Motor neuron (in vitro differentiated cells): ENCODE measurements at regions of chr2 and their contacts with region 1.

Region 1: DNA sequence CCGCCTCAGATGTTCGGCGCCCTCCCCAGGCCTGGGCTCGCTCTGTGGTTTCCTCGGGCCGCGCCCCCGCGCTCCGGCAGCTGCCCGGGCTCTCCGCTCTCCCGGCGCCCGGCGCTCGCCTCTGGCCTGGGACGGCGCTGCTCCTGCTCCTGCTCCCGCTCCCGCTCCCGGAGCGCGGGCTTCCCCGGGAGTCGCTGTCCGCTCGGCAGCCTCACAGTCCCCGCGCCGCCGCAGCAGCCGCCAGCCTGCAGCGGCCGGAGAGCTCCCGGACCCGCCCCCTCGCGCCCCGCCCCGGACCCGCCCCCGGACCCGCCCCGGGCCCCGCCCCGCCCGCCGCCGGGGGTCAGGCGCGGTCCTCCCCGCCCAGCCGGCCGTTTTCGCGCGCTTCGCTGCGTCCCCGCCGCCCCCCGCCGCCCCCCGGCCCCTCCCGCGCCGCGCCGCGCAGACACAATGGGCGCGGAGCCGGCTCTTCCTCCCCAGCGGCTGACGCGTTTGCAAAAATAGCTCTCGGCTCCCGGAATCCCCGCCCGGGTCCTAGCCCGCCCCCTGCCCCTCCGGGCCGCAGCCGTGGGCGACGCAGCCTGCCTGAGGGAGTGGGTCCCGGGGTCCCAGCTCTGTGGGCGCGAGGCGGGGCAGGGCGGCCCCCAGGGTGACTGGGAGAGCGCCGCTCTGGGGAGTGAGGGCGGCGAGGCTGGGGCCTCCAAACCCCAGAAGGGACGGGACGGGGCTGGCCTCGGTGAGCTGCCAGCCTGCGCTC is at the start of gene ARL4C:
- ATAC-seq: peak; percentile 65 to 91 (median 76)
- H3K4me3 ChIP-seq: peak within 1 kb of the TSS; percentile 77 to 98 (median 93)
- H3K27ac ChIP-seq: peak within 1 kb of the TSS; percentile 80 to 89
- H3K4me1 ChIP-seq: peaks cover 7 to 9% of the 10 kb centered on the region in 2 donors
- total RNA-seq, gene ARL4C: 0.27 to 129 (median 47.0) TPM

Region 2: DNA sequence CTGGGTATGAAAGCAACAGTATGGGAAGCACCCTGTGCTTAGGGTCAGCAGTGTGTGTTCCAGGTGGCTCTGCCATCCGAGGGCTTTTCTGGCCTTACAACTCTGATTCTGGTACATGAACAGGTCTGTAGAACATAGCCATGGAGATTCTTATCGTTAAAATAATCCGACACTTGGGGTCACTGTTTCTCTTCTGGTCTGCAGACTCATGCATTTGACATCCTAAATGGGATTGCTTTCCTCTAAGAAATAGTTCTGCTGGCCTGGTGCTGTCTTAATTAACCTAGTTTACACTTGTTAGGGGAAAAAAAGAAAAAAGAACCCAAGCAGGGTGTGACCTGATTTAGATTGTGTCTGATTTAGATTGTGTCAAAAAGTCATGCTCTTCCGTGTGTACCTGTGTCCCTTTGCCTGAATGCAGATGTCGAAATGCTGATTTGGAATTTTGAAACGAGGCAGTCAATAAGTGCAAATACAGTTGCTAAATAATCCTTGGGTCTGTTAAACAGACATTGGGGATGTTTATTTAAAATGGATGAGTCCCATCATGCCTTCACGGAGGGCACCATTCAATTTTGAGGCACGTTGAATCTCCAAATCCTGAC is 520.2 kb before region 1 on chr2:
- in situ Hi-C with region 1: loop called in 1 of 9 experiments (anchors 25 kb)
- ATAC-seq: peak; percentile 6 to 75 (median 66)
- H3K4me3 ChIP-seq: no peak overlapping the region
- H3K27ac ChIP-seq: no peak overlapping the region
- H3K4me1 ChIP-seq: peaks cover 12 to 15% of the 10 kb centered on the region in 2 donors

Region 3: DNA sequence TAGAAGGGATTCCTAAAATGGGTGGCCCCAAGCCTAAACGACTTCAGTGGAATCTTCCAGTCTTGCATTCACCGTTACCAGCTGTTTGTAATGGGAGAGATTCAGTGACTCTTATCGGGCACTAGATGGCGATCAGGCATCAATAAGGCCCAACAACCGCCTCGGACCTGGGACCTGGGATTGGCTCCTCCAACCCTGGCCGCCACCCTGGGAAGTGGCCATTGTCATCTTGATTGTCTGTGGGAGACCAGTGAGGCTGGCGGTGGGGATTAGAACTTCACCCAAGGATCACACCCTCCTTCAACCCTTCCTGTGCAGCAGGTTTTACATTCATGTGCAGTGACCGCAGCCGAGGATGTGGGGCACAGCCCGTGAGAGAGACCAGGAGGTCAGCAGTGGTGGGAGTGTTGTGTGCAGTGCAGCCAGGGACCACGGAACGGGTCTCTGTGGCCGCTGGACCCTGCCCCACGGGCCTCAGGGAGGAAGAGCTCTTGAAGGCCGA is 361.2 kb before region 1 on chr2:
- in situ Hi-C with region 1: loop called in 2 of 9 experiments (anchors 10 to 25 kb)
- ATAC-seq: peak; percentile 91 to 98 (median 94)
- H3K4me3 ChIP-seq: no peak overlapping the region
- H3K27ac ChIP-seq: no peak overlapping the region
- H3K4me1 ChIP-seq: peaks cover 10 to 11% of the 10 kb centered on the region in 2 donors

Region 4: GRCh38 chr2:234288974-234289455 is 208.0 kb before region 1 on chr2:
- in situ Hi-C with region 1: loop called in 1 of 9 experiments (anchors 10 kb)
- ATAC-seq: peak in 5 of 8 experiments; percentile 5 to 65 (median 17)
- H3K4me3 ChIP-seq: no peak overlapping the region
- H3K27ac ChIP-seq: no peak overlapping the region
- H3K4me1 ChIP-seq: peaks cover 17 to 29% of the 10 kb centered on the region in 2 donors